ENCODE measurements at regions of chr15 and their contacts with region 1.

Region 1: DNA sequence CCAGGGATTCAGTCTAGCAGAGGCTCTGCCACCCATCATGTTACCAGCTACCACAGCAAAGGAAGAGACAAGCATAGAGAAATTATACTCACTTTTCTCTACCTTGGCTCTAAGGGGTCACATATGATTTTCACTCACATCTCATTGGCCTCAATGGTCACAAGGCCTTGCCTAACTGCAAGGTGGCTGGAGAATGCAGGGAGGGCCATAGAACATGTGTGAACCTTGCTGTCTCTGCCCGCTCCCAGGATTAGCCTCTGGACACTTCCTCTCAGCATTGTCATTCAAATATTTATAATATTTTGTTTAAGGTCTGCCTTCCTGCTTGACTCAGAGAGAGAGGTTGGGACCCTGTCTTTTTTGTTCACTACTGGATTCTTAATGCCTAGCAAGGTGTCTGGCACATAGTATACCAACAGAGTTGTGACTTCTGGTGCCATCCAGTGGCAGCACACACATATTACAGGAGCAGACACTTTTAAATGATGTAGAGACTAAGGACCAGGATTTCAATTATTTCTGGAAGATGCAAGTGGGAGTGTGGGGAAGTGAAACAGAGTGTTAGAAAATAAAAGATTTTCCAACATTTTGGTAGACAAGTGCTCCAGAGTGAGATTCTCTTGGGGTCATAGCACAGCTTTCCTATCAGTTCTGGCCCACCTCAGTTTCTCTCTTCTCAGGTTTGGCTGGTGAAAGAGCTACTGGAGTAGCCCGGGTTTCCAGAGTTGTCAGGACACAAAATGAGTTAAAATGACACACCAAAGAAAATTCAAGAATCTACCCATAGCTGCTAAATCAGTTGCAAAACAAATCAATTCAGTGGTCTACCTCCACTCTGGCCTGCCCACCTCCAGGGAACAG is 119.0 kb upstream of the RASGRP1 start:
- DNase-seq: peak in 1 of 2 donors; percentile 65
- ATAC-seq: peak; percentile 66
- H3K4me3 ChIP-seq: no peak overlapping the region
- H3K27ac ChIP-seq: no peak overlapping the region
- H3K4me1 ChIP-seq: no peaks in the 10 kb centered on the region
- H3K27me3 ChIP-seq: peaks cover 0 to 2% of the 10 kb centered on the region in 2 donors

Region 2: GRCh38 chr15:38440353-38441129 is 243.1 kb before region 1 on chr15:
- intact Hi-C with region 1: loop called in 1 of 2 experiments (anchors 2 kb)
- DNase-seq: no peak
- ATAC-seq: peak; percentile 91
- H3K4me3 ChIP-seq: no peak overlapping the region
- H3K27ac ChIP-seq: no peak overlapping the region
- H3K4me1 ChIP-seq: no peaks in the 10 kb centered on the region
- H3K27me3 ChIP-seq: no peaks in the 10 kb centered on the region

Measured in aorta (tissue), 5 donors.